Pancreas (tissue), 10 donors: ENCODE measurements at regions of chr17 and their contacts with region 1.

Region 1: DNA sequence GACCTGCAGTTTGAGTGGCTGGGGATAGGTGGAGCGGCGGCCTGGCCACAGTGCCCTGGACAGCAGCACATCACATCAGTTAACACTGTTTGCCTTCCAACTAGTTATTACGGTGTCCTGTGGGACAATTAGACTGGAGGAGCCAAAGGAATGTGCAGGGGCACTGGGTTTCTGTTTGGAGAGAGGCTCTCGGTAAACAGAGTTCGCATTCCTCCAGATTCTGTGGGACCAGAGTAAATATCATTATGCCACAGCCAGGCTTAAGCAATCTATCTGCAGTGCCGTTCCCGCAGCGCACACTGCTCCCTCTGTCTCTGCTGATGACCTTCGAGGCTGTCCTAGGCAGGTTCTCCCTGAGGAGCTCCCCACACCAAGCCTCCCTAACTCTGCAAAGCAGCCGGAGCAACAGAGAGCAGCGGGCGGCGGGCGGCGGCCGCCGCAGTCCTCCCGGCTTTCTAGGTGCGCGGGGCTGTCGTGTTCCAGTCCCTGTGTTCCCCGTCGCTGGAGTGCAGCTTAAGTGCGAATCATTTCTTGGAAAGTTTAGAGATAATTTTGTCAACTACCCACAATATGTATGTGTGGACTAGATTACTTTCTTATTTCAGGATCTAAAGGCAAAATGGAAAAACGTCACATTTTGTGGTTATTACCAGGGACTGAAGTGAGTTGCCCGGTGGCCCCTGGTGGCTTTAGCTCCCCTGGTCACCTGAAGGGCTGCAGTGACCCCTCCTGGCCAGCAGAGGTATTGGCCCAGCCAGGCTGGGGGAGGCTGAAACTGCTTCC is 43.2 kb downstream of the PGS1 start:
- DNase-seq: peak; percentile 60 to 91 (median 78)
- ATAC-seq: peak; percentile 80 to 95 (median 90)
- H3K4me3 ChIP-seq: no peak overlapping the region
- H3K27ac ChIP-seq: no peak overlapping the region
- H3K4me1 ChIP-seq: no peaks in the 10 kb centered on the region
- H3K27me3 ChIP-seq: no peaks in the 10 kb centered on the region
- CTCF ChIP-seq: peak; percentile 92 to 98 (median 95)

Region 2: DNA sequence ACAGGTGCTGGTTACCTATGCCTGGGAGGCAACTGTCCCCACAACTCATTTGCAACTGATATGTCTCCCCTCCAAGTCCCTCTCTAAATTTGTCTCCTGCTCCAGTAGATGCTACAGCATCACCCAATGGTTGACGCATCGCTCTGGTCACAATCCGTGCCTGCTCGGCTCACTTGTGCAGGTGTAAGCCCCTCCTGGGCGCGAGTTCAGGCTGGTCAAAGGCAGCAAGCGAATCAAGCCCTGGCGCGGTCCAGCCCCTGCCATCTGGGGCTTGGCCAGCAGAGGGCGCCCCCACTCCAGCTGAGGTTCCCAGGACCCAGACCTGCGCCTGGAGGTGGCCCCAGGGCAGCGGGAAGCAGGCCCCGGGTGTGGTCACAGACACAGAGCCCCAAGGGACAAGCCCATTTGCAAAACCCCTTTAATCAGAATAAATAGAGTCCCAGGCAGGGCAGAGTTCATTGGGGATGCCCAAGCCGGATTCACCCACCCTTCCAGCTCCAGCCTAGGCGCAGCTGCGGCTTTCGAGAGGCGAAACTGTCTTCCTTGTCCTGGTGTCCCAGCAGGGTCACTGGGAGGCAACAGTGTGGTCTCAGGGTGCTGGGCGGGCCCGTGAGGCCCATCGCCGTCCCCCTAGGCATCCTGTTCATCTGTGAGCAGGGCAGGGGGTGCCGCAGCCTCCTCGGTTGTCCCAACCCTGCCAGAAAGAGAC is 309.0 kb before region 1 on chr17:
- intact Hi-C with region 1: loop called in 1 of 3 experiments (anchors 10 kb)
- DNase-seq: peak in 5 of 6 donors; percentile 59 to 97 (median 85)
- ATAC-seq: peak; percentile 75 to 87 (median 85)
- H3K4me3 ChIP-seq: no peak overlapping the region
- H3K27ac ChIP-seq: no peak overlapping the region
- H3K4me1 ChIP-seq: no peaks in the 10 kb centered on the region
- H3K27me3 ChIP-seq: no peaks in the 10 kb centered on the region
- CTCF ChIP-seq: peak; percentile 97 to 99 (median 98)

Region 3: GRCh38 chr17:78289802-78290363 is 131.8 kb before region 1 on chr17:
- intact Hi-C with region 1: loop called in 2 of 3 experiments (anchors 5 to 10 kb)
- DNase-seq: peak; percentile 66 to 84 (median 72)
- ATAC-seq: peak; percentile 92 to 99 (median 97)
- H3K4me3 ChIP-seq: no peak overlapping the region
- H3K27ac ChIP-seq: no peak overlapping the region
- H3K4me1 ChIP-seq: no peaks in the 10 kb centered on the region
- H3K27me3 ChIP-seq: no peaks in the 10 kb centered on the region
- CTCF ChIP-seq: peak; percentile 45 to 61 (median 48)

Region 4: DNA sequence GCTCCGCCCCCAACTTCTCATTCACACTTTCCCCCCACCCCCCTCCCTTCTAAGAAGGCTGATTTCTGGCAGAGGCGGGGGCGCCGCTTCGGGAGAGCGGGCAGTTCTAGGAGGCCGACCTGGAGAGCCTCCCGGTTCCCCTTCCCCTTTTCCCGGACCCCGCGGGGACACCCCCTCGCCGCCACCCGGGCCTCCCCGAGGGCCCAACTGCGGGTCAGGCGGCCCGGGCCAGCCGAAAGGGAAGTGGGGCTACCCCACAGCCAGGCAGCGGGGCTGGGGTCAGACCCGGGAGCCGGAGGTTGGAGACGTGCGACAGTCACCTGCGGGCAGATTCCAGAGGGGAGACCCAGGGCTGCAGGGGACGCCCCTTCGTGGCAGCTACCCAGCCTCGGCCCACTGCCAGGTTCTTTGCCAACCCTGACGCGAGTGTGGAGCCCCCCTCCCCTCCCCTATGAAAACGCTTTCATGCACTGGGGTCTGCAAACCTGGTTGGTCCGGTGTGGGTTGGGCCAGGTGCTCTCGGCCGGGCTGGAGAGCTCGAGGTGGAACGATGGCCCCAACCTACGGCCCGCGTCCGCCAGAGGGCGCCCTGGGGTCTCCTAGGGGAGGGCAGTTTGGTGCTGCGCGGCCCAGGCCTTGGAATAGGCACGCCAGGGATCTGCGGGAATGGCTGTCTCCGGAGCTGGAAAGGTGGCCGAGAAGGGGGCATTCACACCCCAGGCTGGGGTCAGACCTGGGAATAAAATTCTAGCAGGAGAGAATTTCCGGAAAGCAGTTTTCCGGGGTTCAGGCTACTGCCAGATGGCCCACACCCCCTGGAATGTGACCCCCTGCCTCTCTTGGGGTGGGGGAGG is 61.1 kb before region 1 on chr17:
- intact Hi-C with region 1: loop called in 2 of 3 experiments (anchors 5 kb)
- DNase-seq: peak; percentile 92 to 100 (median 96)
- ATAC-seq: peak; percentile 78 to 84 (median 82)
- H3K4me3 ChIP-seq: peak overlapping the region; percentile 21 to 95 (median 36)
- H3K27ac ChIP-seq: peak overlapping the region; percentile 43 to 94 (median 82)
- H3K4me1 ChIP-seq: peaks cover 5 to 19% (median 6%) of the 10 kb centered on the region in 3 donors
- H3K27me3 ChIP-seq: no peaks in the 10 kb centered on the region
- CTCF ChIP-seq: peak; percentile 83 to 93 (median 88)